PC-9 (cell line): ENCODE measurements at regions of chr1 and their contacts with region 1.

Region 1: DNA sequence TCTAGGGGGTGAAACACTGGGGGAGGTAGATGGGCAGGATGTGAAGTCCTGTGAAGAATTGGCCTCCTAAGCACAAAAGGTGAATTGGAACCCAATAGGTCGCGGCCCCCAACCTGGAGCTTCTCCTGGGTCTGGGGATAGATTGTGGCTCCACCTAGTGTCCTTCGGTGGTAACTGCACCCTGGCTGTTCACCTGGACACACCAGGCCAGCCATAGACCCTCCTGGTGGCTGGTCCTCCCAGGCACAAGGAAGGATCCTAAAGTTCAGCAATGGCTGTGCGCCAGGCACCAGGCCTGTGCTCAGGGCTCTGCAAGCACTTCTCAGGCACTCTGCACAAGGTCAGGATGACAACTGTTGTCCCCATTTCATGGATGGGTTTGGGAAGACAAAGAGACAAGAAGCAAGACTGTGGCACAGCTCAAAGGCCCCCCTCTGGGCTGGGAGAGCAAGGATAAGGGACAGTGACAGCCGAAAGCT is 13.5 kb downstream of the ESPN start:
- DNase-seq: peak; percentile 52 to 76
- H3K4me3 ChIP-seq: no peak overlapping the region
- H3K27ac ChIP-seq: no peak overlapping the region
- H3K4me1 ChIP-seq: no peaks in the 10 kb centered on the region
- H3K27me3 ChIP-seq: no peaks in the 10 kb centered on the region
- CTCF ChIP-seq: peak; percentile 89

Region 2: DNA sequence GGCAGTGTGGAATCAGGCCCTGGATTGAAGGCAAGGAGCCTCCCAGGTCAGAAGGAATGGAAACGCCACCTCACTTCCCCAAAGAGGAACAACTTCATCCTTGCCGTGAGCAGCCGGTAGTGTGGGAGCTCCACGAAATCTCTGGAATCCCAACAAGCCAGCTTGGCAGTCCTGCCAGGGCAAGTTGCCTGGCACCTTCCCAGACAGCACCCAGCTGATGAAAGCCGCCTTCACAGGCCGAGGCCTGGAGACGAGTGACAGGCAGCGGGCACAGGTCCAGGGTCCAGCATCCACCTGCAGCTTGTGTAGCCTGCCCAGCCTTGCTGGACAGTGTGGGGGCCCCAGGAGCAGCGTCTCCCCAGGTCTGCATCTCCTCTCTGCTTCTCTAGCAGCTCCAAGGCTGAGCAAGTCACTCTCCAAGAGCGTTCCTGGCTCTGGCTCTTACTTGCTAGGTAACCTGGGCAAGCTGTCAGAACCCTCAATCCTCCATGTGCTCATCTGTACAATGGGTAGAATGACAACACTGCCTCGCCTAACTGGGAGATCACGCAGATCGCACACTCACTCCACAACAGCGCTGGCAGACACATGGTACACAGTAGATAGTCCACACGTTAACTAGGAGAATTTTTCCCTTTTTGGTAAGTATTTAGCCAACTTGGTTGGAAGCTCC is 87.5 kb before region 1 on chr1:
- CTCF ChIA-PET with region 1: no interaction called
- POLR2A ChIA-PET with region 1: no interaction called
- intact Hi-C with region 1: loop called (anchors 1 kb)
- DNase-seq: peak; percentile 64 to 81
- H3K4me3 ChIP-seq: no peak overlapping the region
- H3K27ac ChIP-seq: no peak overlapping the region
- H3K4me1 ChIP-seq: peaks cover 9% of the 10 kb centered on the region; the same call in 1 of the 2 replicates
- H3K27me3 ChIP-seq: no peaks in the 10 kb centered on the region
- CTCF ChIP-seq: no peak

Region 3: DNA sequence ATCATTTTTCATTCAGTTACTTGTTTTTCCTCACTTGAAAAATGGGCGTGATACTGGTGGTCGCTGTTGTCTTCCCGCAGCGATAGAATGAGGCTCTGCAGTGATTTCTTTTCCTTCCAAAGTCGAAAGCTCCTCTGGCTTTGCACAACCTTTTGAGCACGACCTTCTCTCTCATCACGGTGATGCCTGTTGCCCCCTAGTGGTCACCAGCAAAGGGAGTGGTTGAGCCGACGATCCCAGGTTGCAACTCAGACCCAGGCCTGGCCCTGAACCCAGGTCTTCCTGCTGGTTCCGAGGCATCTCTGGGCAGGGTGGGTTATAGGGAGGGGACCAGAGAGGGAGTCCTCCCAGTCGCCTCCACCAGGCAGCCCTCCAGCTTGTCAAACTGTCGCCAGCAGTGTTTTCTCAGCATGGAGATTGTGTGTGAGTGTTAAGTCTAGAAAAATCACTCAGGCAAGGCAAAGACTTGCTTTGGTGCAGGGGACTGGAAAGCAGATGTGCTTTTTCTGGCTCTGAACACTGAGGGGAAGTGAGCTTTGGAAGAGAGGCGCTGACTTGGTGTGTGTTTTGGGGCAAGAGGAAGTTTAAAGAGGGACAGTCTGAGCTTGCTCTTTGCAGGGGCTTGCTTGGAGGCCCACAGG is 632.4 kb after region 1 on chr1:
- CTCF ChIA-PET with region 1: no interaction called
- POLR2A ChIA-PET with region 1: no interaction called
- intact Hi-C with region 1: no loop called
- DNase-seq: peak in 1 of 2 experiments; percentile 32
- H3K4me3 ChIP-seq: no peak overlapping the region
- H3K27ac ChIP-seq: no peak overlapping the region
- H3K4me1 ChIP-seq: no peaks in the 10 kb centered on the region
- H3K27me3 ChIP-seq: peaks cover 30% of the 10 kb centered on the region
- CTCF ChIP-seq: peak; percentile 75